Mammary epithelial cell (primary cell): ENCODE measurements at regions of chr20 and their contacts with region 1.

Region 1: DNA sequence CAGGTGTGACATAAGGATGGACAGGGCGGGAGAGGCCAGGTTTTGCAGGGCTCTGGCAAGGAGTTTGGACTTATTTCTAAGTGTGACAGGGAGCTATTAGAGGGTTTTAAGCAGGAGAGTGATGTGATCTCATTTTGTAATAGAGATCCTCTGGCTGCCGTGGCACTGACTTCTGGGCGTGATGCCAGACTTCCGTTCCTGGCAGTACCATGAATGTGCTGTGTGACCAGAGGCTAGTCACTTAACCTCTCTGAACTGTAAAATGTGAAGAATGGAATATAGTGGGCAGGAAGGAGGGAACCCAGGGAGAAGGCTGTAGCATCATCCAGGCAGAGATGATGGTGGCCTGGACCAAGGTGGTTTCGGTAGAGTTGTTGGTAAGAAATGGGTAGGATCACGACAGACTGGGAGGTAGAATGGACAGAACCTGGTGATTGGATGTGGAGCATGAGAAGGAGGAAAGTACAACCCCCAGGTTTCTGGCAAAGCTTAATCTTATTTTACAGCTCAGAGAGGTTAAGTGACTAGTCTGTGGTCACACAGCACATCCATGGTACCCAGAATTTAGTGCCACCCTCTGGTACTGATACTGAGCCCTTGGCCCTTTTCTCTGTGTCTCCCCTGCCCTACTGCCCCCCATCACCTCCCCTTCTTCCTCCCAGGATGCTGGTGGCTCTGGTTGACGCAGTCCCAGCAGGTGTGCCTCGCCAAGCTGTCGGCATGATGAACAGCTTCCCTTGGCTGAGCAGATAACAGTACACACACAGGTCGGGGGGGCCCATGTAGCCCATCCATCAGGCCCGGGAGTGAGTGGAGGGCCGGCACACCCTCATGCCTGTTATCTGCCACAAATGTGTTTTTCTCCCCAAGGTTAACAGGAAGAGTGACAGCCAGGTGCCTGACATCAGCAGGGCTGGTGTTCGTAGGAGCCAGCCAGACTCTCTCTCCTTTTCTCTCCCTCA is 52.9 kb upstream of the CTNNBL1 start:
- DNase-seq: peak; percentile 13
- H3K4me3 ChIP-seq: no peak overlapping the region
- H3K27ac ChIP-seq: no peak overlapping the region
- H3K4me1 ChIP-seq: no peaks in the 10 kb centered on the region
- H3K27me3 ChIP-seq: peaks cover 2% of the 10 kb centered on the region
- CTCF ChIP-seq: no peak

Region 2: GRCh38 chr20:37526238-37526838 is 114.5 kb before region 1 on chr20:
- CTCF ChIA-PET with region 1: no interaction called
- dilution Hi-C with region 1: no loop called
- in situ Hi-C with region 1: no loop called
- intact Hi-C with region 1: no loop called
- DNase-seq: peak; percentile 90
- H3K4me3 ChIP-seq: peak overlapping the region; percentile 80 to 97 (median 95)
- H3K27ac ChIP-seq: peak overlapping the region; percentile 97
- H3K4me1 ChIP-seq: peaks cover 48% of the 10 kb centered on the region
- H3K27me3 ChIP-seq: no peaks in the 10 kb centered on the region
- CTCF ChIP-seq: no peak

Region 3: DNA sequence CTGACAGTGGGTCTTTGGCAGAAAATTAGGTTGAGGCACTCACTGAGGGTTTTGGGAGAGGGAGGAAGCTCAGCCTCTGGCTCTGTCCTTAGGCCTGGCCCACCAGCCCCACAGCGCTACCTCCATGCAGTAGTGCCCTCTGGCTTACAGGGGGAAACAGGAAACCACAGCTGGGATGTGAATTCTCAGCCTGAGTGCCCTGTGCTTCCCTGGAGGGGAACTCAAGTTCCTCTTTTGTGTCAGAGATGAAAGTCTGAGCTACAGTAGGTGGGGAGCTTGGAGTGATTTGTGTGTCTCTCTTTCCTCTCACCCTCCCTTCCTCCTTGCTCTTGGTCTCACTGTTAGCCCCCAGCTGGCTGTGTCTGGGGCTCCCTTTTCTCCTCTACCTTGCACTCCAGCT is 65.0 kb before region 1 on chr20:
- CTCF ChIA-PET with region 1: no interaction called
- dilution Hi-C with region 1: loop called (anchors 5 kb)
- in situ Hi-C with region 1: no loop called
- intact Hi-C with region 1: no loop called
- DNase-seq: no peak
- H3K4me3 ChIP-seq: no peak overlapping the region
- H3K27ac ChIP-seq: no peak overlapping the region
- H3K4me1 ChIP-seq: no peaks in the 10 kb centered on the region
- H3K27me3 ChIP-seq: no peaks in the 10 kb centered on the region
- CTCF ChIP-seq: no peak